RWPE1 (cell line): ENCODE measurements at regions of chr10 and their contacts with region 1.

Region 1: GRCh38 chr10:116287906-116288501 is 15.0 kb upstream of the GFRA1 start:
- DNase-seq: peak; percentile 48
- H3K27ac ChIP-seq: no peak overlapping the region
- CTCF ChIP-seq: peak; percentile 56

Region 2: GRCh38 chr10:115706026-115706781 is 581.8 kb before region 1 on chr10:
- CTCF ChIA-PET with region 1: interaction called, 19 read pairs
- POLR2A ChIA-PET with region 1: no interaction called
- DNase-seq: peak; percentile 7
- H3K27ac ChIP-seq: no peak overlapping the region
- CTCF ChIP-seq: peak; percentile 28; the same call in 1 of the 2 replicates

Region 3: DNA sequence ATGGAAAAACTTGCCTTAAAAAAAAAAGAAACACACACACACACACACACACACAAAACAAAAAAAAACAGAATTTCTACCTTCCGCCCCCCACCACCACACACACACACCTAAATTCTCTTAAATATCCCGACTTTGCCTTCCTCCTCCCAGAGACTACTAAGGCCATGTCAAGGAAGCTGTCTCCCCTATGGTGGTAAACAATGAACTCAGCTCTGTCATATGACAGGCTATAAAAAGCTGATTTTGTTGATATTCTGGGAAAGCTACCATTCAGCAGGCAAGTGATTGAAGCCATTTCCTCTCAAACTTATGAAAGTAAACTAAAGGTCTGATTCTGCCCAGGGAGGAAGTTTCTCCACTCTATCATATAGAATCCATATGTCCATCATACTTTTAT is 486.0 kb before region 1 on chr10:
- CTCF ChIA-PET with region 1: interaction called, 10 read pairs
- POLR2A ChIA-PET with region 1: no interaction called
- DNase-seq: no peak
- H3K27ac ChIP-seq: no peak overlapping the region
- CTCF ChIP-seq: no peak

Region 4: DNA sequence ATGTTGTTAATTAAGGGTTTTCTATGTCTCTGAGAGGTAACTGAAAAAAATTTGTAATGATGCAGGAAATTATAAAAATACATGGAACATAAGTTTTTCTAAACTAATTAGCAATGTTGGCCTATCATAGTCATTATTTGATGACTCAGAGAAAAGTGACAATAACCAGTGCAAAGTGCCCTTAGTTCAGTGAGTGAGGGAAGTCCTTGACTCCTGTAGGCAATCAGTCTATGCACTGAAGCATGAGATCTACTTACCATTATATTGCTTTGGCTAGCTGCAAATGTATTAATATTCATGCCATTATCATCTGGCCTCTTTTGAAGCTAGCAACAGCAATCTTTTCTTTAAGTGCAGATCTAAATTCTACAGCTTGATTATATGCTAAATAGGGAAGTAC is 76.9 kb after region 1 on chr10:
- CTCF ChIA-PET with region 1: no interaction called
- POLR2A ChIA-PET with region 1: no interaction called
- DNase-seq: no peak
- H3K27ac ChIP-seq: no peak overlapping the region
- CTCF ChIP-seq: no peak